ENCODE measurements at regions of chr14 and their contacts with region 1.

Region 1: DNA sequence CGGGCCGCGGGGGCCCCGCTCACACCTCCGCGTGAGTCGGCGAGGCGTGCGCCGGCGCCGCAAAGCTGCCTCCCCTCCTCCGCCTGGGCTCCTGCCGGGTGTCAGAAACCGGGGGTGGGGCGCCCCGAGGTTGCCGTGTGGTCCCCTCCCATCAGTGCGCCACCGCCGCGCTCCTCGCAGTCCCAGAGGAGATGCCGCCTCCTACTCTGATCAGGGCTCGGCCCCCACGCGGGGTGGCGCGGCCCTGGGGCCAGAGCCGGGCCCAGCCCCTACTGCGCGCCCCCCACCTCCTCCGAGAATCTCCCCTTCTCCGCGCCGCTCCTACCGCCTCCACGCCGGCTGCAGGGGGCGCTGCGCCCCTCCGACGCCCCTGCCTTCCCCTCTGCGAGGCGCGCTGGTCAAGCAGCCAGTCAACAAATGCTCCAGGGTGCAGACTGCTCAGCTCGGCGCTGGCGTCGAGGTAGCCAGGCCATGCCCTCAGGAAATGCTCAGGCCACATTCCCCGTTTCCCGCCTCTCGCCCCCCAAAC is 467 bp upstream of the JAG2 start:
- DNase-seq: peak in 1 of 3 donors; percentile 53
- ATAC-seq: no peak
- H3K4me3 ChIP-seq: no peak overlapping the region
- H3K4me1 ChIP-seq: peaks cover 5% of the 10 kb centered on the region
- CTCF ChIP-seq: peak; percentile 14

Region 2: GRCh38 chr14:105090493-105091053 is 78.5 kb before region 1 on chr14:
- intact Hi-C with region 1: loop called in 1 of 2 experiments (anchors 10 kb)
- DNase-seq: peak; percentile 89 to 94 (median 91)
- ATAC-seq: peak; percentile 55
- H3K4me3 ChIP-seq: no peak overlapping the region
- H3K4me1 ChIP-seq: peaks cover 53% of the 10 kb centered on the region
- CTCF ChIP-seq: peak; percentile 91